Adrenal gland (tissue), 19 donors: ENCODE measurements at regions of chr6 and their contacts with region 1.

Region 1: DNA sequence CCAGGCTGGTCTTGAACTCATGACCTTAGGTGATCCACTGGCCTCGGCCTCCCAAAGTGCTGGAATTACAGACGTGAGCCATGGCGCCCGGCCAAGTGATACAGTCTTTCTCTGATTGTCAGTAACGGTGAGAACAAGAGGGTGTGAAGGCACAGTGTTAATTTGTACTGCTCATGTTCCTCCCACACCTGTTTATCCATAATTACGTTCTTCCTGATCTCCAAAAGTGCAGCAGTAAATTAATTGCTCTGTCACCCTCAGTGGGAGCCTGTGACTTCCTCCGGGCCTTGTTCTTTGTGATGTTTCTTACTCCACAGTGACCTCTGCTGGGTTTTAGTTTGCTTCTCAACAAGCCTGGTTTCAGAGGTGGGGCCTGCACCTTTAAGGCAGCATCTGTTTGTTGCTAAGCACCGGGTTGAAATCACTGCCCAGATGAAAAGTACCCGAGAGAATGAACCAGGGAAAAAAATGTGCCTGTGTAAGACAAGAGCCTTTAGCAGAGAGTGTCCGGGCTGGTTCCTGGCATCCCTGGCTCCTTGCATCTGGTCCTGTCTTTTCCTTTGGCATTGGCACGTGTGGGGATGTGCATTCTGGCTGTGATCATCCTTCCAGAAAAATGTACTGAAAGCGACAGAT is 89.1 kb upstream of the CLDN20 start:
- DNase-seq: peak; percentile 62 to 85 (median 67)
- H3K4me3 ChIP-seq: no peak overlapping the region
- H3K27ac ChIP-seq: no peak overlapping the region
- H3K4me1 ChIP-seq: peaks cover 0 to 18% of the 10 kb centered on the region in 2 donors
- H3K27me3 ChIP-seq: no peaks in the 10 kb centered on the region
- CTCF ChIP-seq: peak; percentile 23 to 74 (median 64)
- POLR2A ChIP-seq: no peak

Region 2: GRCh38 chr6:154675602-154676088 is 499.0 kb before region 1 on chr6:
- intact Hi-C with region 1: loop called in 1 of 2 experiments (anchors 10 kb)
- DNase-seq: peak; percentile 86 to 98 (median 90)
- H3K4me3 ChIP-seq: no peak overlapping the region
- H3K27ac ChIP-seq: no peak overlapping the region
- H3K4me1 ChIP-seq: no peaks in the 10 kb centered on the region
- H3K27me3 ChIP-seq: no peaks in the 10 kb centered on the region
- CTCF ChIP-seq: peak; percentile 97 to 100 (median 100)
- POLR2A ChIP-seq: no peak

Region 3: GRCh38 chr6:154868143-154868594 is 306.5 kb before region 1 on chr6:
- intact Hi-C with region 1: loop called in 1 of 2 experiments (anchors 10 kb)
- DNase-seq: no peak
- H3K4me3 ChIP-seq: no peak overlapping the region
- H3K27ac ChIP-seq: no peak overlapping the region
- H3K4me1 ChIP-seq: no peaks in the 10 kb centered on the region
- H3K27me3 ChIP-seq: no peaks in the 10 kb centered on the region
- CTCF ChIP-seq: peak; percentile 44 to 81 (median 67)
- POLR2A ChIP-seq: no peak

Region 4: GRCh38 chr6:154928325-154928922 is 246.3 kb before region 1 on chr6:
- intact Hi-C with region 1: loop called (anchors 5 kb)
- DNase-seq: peak; percentile 50 to 85 (median 66)
- H3K4me3 ChIP-seq: no peak overlapping the region
- H3K27ac ChIP-seq: no peak overlapping the region
- H3K4me1 ChIP-seq: peaks cover 0 to 18% of the 10 kb centered on the region in 2 donors
- H3K27me3 ChIP-seq: no peaks in the 10 kb centered on the region
- CTCF ChIP-seq: peak; percentile 66 to 85 (median 78)
- POLR2A ChIP-seq: no peak

Region 5: DNA sequence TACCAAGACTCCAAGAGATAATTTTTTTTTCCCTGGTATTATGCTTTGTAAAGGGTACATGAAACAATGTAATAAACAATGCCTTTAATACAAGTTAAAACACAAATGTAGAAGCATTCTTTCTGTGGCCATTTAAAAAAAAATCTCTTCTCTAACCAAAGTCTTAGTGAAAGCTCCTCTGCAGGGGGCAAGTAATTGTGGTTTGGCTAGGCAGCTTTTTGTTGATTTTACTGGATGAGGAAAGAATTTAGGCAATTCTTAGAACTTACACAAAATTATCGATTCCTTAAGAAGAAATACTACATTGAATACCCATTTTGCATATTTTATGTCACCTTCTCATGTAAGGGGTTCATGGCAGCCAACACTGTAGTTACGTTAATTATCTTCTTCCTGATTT is 127.2 kb after region 1 on chr6:
- intact Hi-C with region 1: loop called in 1 of 2 experiments (anchors 10 kb)
- DNase-seq: no peak
- H3K4me3 ChIP-seq: no peak overlapping the region
- H3K27ac ChIP-seq: no peak overlapping the region
- H3K4me1 ChIP-seq: peaks cover 4 to 7% of the 10 kb centered on the region in 2 donors
- H3K27me3 ChIP-seq: no peaks in the 10 kb centered on the region
- CTCF ChIP-seq: no peak
- POLR2A ChIP-seq: no peak

Region 6: DNA sequence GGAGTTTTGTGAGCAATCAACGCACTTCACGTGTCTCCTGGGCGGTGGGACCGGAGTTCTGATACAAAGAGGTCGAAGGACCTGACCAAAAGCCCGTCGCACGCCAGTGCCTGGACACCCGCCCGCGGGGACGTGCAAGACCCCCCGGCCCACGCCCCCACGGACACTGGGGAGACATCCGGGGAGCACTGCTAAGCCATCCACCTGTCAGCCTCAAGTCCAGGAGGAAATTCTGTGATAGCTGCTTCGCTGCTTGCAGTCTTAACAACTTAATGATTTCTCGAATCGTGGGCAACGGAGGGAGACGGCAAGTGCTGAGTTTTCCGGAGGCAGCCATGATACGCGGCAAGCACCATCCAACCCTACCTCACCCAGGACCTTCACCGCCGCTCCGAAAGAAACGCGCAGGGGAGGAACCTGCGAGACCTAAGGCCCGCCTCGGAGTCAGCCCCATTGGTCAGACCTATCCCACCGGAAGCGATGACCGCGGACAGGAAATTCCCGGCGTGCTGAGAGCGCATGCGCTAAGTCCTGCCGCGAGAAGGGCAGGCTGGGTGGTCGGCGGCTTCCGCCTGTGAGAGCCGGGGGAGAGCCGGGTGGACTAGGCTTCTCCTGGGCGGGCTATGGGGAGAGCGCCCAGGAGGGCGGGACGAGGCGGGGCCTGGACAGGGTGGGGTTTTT is 139.5 kb after region 1 on chr6 and contains the start of gene TFB1M:
- intact Hi-C with region 1: loop called (anchors 10 kb)
- DNase-seq: peak; percentile 98 to 99 (median 99)
- H3K4me3 ChIP-seq: peak within 1 kb of the TSS; percentile 69 to 83 (median 78)
- H3K27ac ChIP-seq: peak within 1 kb of the TSS; percentile 67 to 94 (median 87)
- H3K4me1 ChIP-seq: peaks cover 0 to 23% of the 10 kb centered on the region in 2 donors
- H3K27me3 ChIP-seq: no peaks in the 10 kb centered on the region
- CTCF ChIP-seq: peak in 1 of 6 experiments; percentile 3
- POLR2A ChIP-seq: peak; percentile 83 to 98
- total RNA-seq, gene TFB1M: 17.1 to 55.9 (median 50.1) TPM